Dorsolateral prefrontal cortex (tissue), 120 donors: ENCODE measurements at regions of chr15 and their contacts with region 1.

Region 1: DNA sequence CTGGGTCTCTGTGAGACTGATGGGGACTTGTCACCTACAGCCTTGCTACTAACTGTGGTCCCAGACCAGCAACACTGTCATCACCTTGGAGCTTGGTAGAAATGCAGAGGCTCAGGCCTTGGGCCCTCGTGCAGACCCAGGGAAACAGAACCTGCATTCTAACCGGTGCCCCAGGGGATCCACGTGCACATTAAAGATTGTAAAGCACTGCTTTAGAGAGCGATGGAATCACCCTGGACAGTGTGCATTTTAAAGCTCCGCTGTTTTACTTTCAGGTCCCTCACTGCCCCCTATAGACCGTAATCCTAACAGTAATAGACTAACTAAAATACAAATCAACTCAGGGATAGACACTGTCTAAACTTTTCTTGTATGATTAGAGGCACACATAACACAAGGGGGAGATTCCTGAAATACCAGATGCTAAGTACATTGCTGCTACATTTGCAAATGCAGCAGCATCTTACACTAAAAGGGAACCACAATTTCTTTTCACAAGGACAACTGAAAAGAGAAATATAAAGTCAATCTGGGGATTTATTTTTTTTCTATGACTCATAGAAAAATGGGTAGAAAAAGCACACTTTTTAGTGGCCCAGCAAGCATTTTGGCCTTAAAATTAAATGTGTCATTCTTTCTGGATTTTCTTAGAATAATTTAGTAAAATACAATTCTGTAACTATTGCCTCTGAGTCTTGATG is 10.5 kb upstream of the SH3GL3 start:
- DNase-seq: no peak
- H3K4me3 ChIP-seq: no peak overlapping the region
- H3K27ac ChIP-seq: no peak overlapping the region
- H3K27me3 ChIP-seq: no peaks in the 10 kb centered on the region
- CTCF ChIP-seq: peak in 55 of 56 donors; percentile 32 to 79 (median 59)

Region 2: GRCh38 chr15:83066734-83067637 is 369.6 kb before region 1 on chr15 and contains the start of gene BTBD1:
- intact Hi-C with region 1: loop called in 1 of 2 experiments (anchors 10 kb)
- DNase-seq: peak; percentile 73 to 95 (median 88)
- H3K4me3 ChIP-seq: peak within 1 kb of the TSS; percentile 68 to 98 (median 91)
- H3K27ac ChIP-seq: peak within 1 kb of the TSS; percentile 72 to 99 (median 96)
- H3K27me3 ChIP-seq: no peaks in the 10 kb centered on the region
- CTCF ChIP-seq: peak in 48 of 56 donors; percentile 13 to 69 (median 36)
- total RNA-seq, gene BTBD1: 61.4 to 113 (median 85.9) TPM

Region 3: GRCh38 chr15:83144189-83144588 is 292.4 kb before region 1 on chr15:
- intact Hi-C with region 1: no loop called
- DNase-seq: no peak
- H3K4me3 ChIP-seq: no peak overlapping the region
- H3K27ac ChIP-seq: no peak overlapping the region
- H3K27me3 ChIP-seq: no peaks in the 10 kb centered on the region
- CTCF ChIP-seq: no peak

Region 4: GRCh38 chr15:83320404-83320803 is 116.2 kb before region 1 on chr15:
- intact Hi-C with region 1: no loop called
- DNase-seq: no peak
- H3K4me3 ChIP-seq: no peak overlapping the region
- H3K27ac ChIP-seq: no peak overlapping the region
- H3K27me3 ChIP-seq: peaks cover 0 to 4% (median 0%) of the 10 kb centered on the region in 45 donors
- CTCF ChIP-seq: no peak

Region 5: DNA sequence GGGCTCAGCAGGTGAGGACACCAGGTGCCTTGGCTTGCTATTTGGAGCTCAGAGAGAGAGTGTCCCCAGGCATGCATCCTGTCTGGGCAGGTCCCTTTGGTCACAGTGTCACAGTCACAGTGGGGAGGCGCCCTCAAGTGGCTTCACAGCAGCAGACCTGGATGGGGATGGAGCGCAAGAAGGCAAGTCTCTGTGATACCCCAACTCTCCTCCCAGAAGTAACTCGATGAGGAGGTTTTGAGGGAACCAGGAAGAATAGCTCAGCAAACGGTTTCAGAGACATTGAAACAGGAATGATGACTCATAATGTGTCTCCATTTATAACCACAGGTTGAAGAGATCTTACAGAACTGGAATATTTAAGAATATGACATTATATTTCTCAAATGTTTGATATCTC is 55.9 kb before region 1 on chr15:
- intact Hi-C with region 1: loop called in 1 of 2 experiments (anchors 5 kb)
- DNase-seq: peak in 5 of 10 donors; percentile 42 to 73 (median 54)
- H3K4me3 ChIP-seq: no peak overlapping the region
- H3K27ac ChIP-seq: no peak overlapping the region
- H3K27me3 ChIP-seq: peaks cover 0 to 64% (median 42%) of the 10 kb centered on the region in 45 donors
- CTCF ChIP-seq: peak in 47 of 56 donors; percentile 12 to 71 (median 47)

Region 6: DNA sequence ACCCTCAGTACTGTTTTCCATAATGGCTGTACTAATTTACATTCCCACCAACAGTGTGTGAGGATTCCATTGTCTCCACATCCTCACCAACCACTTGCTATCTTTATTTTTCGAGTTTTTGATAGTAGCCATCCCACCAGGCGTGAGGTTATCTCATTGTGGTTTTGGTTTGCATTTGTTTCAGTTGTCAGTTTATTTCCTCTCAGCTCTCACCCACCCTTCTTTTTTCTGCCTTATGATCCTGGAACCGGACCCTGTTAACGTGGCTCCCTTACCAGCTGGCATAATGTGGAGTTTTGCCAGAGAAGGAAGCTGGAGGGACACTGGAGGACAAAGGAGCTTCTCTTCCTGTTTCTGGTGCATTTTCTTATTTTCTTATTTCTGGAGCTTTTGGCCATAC is 14.5 kb before region 1 on chr15:
- intact Hi-C with region 1: no loop called
- DNase-seq: no peak
- H3K4me3 ChIP-seq: no peak overlapping the region
- H3K27ac ChIP-seq: no peak overlapping the region
- H3K27me3 ChIP-seq: peaks cover 0 to 15% (median 0%) of the 10 kb centered on the region in 45 donors
- CTCF ChIP-seq: no peak

Region 7: DNA sequence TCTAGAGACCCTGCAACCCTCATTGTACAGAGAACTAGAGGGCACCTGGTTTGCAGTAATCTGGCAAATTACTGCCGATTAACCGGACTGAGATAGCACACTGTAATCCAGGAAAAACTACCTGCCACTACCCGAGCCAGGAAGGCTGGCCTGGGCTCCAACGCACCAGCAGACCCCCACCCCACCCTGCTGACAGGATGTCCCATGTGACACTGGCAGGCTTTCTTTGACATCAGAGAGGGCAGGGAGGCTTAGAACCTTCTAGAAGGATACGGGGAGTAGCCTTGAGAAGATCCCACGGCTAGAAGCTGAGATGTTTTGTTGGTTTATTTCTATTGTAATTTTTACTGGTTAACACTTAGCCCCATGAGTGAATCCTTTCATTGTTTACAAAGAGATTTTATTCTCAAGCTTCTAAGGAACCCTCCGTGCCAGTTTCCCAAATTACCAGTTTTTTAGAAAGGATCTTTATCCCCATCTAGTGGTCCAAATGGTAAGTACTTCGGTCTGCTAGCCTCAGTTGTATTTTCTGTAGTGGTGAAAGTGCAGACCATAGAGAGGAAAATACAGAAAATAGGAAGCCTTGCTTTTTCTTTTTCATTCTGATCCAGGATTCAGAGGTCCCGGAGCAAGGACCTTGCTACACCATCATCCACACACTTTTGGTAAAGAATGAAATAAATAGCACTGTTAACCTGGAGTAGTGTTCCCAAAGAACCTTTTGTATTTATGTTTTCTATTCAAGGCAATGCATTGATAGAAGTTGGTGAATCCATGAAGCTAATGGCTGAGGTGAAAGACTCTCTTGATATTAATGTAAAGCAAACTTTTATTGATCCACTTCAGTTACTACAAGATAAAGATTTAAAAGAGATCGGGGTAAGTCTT is 135.5 kb after region 1 on chr15:
- intact Hi-C with region 1: loop called in 1 of 2 experiments (anchors 5 kb)
- DNase-seq: no peak
- H3K4me3 ChIP-seq: peak overlapping the region in 8 of 59 donors; percentile 5 to 34 (median 12)
- H3K27ac ChIP-seq: peak overlapping the region; percentile 44 to 100 (median 96)
- H3K27me3 ChIP-seq: no peaks in the 10 kb centered on the region
- CTCF ChIP-seq: peak; percentile 57 to 92 (median 82)

Region 8: DNA sequence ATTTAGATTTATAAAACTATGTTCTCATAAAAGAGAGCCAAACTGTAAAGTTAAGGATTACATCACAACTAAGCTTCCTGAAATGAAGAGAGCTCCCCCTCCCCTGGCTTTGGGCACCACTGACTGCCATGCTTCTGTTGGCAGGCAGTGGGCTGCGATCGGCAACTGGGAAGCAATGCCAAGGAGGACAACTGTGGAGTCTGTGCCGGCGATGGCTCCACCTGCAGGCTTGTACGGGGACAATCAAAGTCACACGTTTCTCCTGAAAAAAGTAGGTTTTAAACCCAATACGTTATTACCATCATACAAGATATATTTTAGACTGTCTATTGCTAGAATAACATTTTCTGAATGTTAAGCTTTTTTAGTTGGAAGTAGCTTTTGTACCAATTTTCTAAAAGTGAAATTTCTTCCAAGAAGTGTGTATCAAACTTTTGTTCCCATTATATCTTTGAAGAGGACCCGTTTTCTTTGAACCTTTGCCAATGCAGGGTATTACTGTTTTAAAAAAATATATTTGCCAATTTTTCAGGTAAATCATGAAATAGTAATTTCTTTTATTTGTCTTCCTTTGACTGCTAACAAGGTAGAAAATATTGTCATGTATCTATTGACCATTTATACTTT is 401.4 kb after region 1 on chr15:
- intact Hi-C with region 1: loop called in 1 of 2 experiments (anchors 5 kb)
- DNase-seq: peak; percentile 43 to 71 (median 50)
- H3K4me3 ChIP-seq: no peak overlapping the region
- H3K27ac ChIP-seq: no peak overlapping the region
- H3K27me3 ChIP-seq: no peaks in the 10 kb centered on the region
- CTCF ChIP-seq: peak in 54 of 56 donors; percentile 35 to 74 (median 58)